T-cell (primary cell): ENCODE measurements at regions of chr12 and their contacts with region 1.

Region 1: DNA sequence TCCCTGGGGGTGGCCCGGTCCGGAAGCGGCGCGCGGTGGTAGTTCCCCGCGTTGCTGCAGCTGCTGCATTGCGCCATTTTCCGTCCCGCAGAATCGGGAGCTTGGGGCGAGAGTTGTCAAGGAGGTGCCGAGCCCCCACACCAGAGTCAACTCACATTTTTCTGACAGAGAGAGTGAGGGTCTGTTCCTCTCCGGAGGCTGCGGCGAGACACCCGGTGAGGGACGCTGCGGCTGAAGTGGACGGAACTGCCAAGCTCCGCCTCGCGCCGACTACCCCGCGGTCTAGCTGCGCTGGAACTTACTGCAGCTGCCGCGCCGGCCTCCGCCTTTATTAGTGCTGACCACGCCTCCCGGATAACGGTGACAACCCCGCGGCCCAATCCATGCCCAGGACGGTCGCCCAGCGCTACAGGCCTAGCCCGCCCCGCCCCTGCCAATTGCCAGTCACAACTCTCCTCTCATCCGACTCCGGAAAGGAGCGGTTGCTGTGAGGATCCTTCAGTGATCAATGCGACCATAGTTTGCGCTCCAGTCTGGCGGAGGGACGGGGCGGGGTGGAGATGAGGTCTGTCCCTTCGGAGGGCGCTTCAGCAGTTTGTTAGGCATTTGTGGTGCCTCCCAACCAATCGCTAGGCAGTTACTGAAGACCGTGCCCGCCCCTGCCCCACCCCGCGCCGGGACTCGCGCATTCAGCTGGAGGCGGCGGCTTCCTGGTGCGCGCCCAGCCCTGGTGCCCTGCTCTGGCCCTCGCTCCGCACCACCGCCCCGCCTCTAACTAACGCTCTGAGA is at the start of gene VAMP1:
- DNase-seq: peak; percentile 89 to 98 (median 95)
- ATAC-seq: peak; percentile 88 to 96 (median 92)
- H3K4me3 ChIP-seq: peak within 1 kb of the TSS; percentile 86 to 93
- H3K4me3 Mint-ChIP-seq: peak within 1 kb of the TSS; percentile 87 to 93 (median 91)
- H3K27ac ChIP-seq: peak within 1 kb of the TSS; percentile 83
- H3K27ac Mint-ChIP-seq: peak within 1 kb of the TSS; percentile 92 to 96
- H3K4me1 ChIP-seq: peaks cover 24 to 41% of the 10 kb centered on the region in 2 experiments
- H3K4me1 Mint-ChIP-seq: peaks cover 50 to 53% (median 52%) of the 10 kb centered on the region in 3 donors
- H3K27me3 ChIP-seq: no peaks in the 10 kb centered on the region
- H3K27me3 Mint-ChIP-seq: no peaks in the 10 kb centered on the region
- total RNA-seq, gene VAMP1: 64.6 to 92.2 (median 75.8) TPM

Region 2: GRCh38 chr12:6335451-6336078 is 135.0 kb before region 1 on chr12:
- CTCF ChIA-PET with region 1: interaction called, 5 to 16 read pairs
- POLR2A ChIA-PET with region 1: interaction called in 1 of 2 experiments, 4 read pairs
- DNase-seq: peak; percentile 73 to 90 (median 83)
- ATAC-seq: peak; percentile 72 to 80 (median 76)
- H3K4me3 ChIP-seq: peak overlapping the region; percentile 94 to 99
- H3K4me3 Mint-ChIP-seq: no peak overlapping the region
- H3K27ac ChIP-seq: peak overlapping the region; percentile 88
- H3K27ac Mint-ChIP-seq: no peak overlapping the region
- H3K4me1 ChIP-seq: peaks cover 58 to 79% of the 10 kb centered on the region in 2 experiments
- H3K4me1 Mint-ChIP-seq: peaks cover 8 to 31% (median 26%) of the 10 kb centered on the region in 3 donors
- H3K27me3 ChIP-seq: no peaks in the 10 kb centered on the region
- H3K27me3 Mint-ChIP-seq: no peaks in the 10 kb centered on the region

Region 3: DNA sequence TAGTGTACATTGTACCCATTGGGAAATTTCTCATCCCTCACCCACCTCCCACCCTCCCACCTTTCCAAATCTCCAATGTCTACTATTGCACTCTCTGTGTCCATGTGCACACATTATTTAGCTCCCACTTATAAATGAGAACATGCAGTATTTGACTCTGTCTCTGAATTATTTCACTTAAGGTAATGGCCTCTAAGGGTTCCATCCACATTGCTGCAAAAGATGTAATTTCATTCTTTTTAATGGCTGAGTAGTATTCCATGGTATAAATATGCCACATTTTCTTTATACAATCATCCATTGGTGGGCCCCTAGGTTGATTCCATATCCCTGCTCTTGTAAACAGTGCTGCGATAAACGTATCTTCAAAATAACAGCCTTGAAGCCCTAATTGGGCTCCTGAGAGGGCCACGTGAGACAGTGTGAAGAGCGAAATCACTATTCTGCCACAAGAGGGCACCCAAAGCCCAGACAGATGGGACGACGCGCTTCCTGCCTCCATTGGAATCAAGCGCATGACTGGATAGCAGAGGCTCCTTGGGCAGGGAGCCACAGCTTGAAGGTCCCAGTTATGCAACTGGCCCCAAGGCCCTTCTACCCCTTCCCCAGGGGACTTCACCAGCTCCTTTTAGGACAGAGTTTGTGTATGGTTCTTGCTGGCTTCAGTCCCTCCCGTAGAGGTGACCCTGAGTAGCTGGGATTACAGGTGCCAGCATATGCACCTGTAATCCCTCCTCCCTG is 47.1 kb before region 1 on chr12:
- CTCF ChIA-PET with region 1: interaction called, 19 to 45 read pairs
- POLR2A ChIA-PET with region 1: interaction called, 6 to 7 read pairs
- DNase-seq: peak; percentile 56 to 95 (median 73)
- ATAC-seq: peak; percentile 74 to 82 (median 75)
- H3K4me3 ChIP-seq: no peak overlapping the region
- H3K4me3 Mint-ChIP-seq: peak overlapping the region in 1 of 3 donors; percentile 44
- H3K27ac ChIP-seq: peak overlapping the region; percentile 3
- H3K27ac Mint-ChIP-seq: peak overlapping the region; percentile 54 to 83
- H3K4me1 ChIP-seq: peaks cover 24 to 43% of the 10 kb centered on the region in 2 experiments
- H3K4me1 Mint-ChIP-seq: peaks cover 37 to 44% (median 38%) of the 10 kb centered on the region in 3 donors
- H3K27me3 ChIP-seq: no peaks in the 10 kb centered on the region
- H3K27me3 Mint-ChIP-seq: peaks cover 0 to 2% of the 10 kb centered on the region in 2 donors

Region 4: GRCh38 chr12:6443361-6443983 is 27.1 kb before region 1 on chr12:
- CTCF ChIA-PET with region 1: interaction called, 11 to 17 read pairs
- POLR2A ChIA-PET with region 1: interaction called, 3 to 8 read pairs
- DNase-seq: peak in 2 of 35 experiments; percentile 25 to 45
- ATAC-seq: peak in 2 of 4 experiments; percentile 15 to 17
- H3K4me3 ChIP-seq: no peak overlapping the region
- H3K4me3 Mint-ChIP-seq: peak overlapping the region; percentile 98 to 99 (median 99)
- H3K27ac ChIP-seq: peak overlapping the region; percentile 77
- H3K27ac Mint-ChIP-seq: peak overlapping the region; percentile 95 to 97
- H3K4me1 ChIP-seq: peaks cover 28 to 48% of the 10 kb centered on the region in 2 experiments
- H3K4me1 Mint-ChIP-seq: peaks cover 53 to 78% (median 69%) of the 10 kb centered on the region in 3 donors
- H3K27me3 ChIP-seq: no peaks in the 10 kb centered on the region
- H3K27me3 Mint-ChIP-seq: no peaks in the 10 kb centered on the region

Region 5: GRCh38 chr12:6533923-6534694 is 63.5 kb after region 1 on chr12 and contains the start of gene GAPDH:
- CTCF ChIA-PET with region 1: interaction called, 10 to 12 read pairs
- POLR2A ChIA-PET with region 1: interaction called in 1 of 2 experiments, 6 read pairs
- DNase-seq: peak in 20 of 35 experiments; percentile 66 to 88 (median 79)
- ATAC-seq: peak; percentile 7 to 51 (median 40)
- H3K4me3 ChIP-seq: peak within 1 kb of the TSS; percentile 90 to 96
- H3K4me3 Mint-ChIP-seq: peak within 1 kb of the TSS; percentile 90 to 97 (median 94)
- H3K27ac ChIP-seq: peak within 1 kb of the TSS; percentile 90
- H3K27ac Mint-ChIP-seq: peak within 1 kb of the TSS; percentile 98
- H3K4me1 ChIP-seq: peaks cover 27 to 62% of the 10 kb centered on the region in 2 experiments
- H3K4me1 Mint-ChIP-seq: peaks cover 47 to 58% (median 50%) of the 10 kb centered on the region in 3 donors
- H3K27me3 ChIP-seq: no peaks in the 10 kb centered on the region
- H3K27me3 Mint-ChIP-seq: no peaks in the 10 kb centered on the region
- total RNA-seq, gene GAPDH: 500 to 643 (median 605) TPM